HCT116 (cell line): ENCODE measurements at regions of chr17 and their contacts with region 1.

Region 1: GRCh38 chr17:82105882-82106687 is 8.0 kb upstream of the FASN start:
- DNase-seq: peak; percentile 82
- ATAC-seq: peak; percentile 95
- H3K4me3 ChIP-seq: peak overlapping the region; percentile 68 to 70
- H3K27ac ChIP-seq: peak overlapping the region; percentile 94
- H3K4me1 ChIP-seq: peaks cover 37 to 55% of the 10 kb centered on the region in 2 experiments
- H3K27me3 ChIP-seq: no peaks in the 10 kb centered on the region
- CTCF ChIP-seq: peak in 2 of 3 experiments; percentile 71 to 91; a peak in 4 of 6 replicates
- POLR2A ChIP-seq: peak; percentile 95
- RAD21 ChIP-seq: no peak

Region 2: GRCh38 chr17:81911277-81911961 is 194.7 kb before region 1 on chr17 and contains the start of gene PCYT2:
- CTCF ChIA-PET with region 1: no interaction called
- POLR2A ChIA-PET with region 1: no interaction called
- RAD21 ChIA-PET with region 1: no interaction called
- intact Hi-C with region 1: no loop called
- DNase-seq: peak; percentile 90
- ATAC-seq: peak; percentile 88
- H3K4me3 ChIP-seq: peak within 1 kb of the TSS; percentile 85 to 94
- H3K27ac ChIP-seq: peak within 1 kb of the TSS; percentile 72
- H3K4me1 ChIP-seq: peaks cover 34 to 47% of the 10 kb centered on the region in 2 experiments
- H3K27me3 ChIP-seq: no peaks in the 10 kb centered on the region
- CTCF ChIP-seq: peak in 2 of 3 experiments; percentile 39 to 51; a peak in 4 of 6 replicates
- POLR2A ChIP-seq: no peak
- RAD21 ChIP-seq: no peak
- total RNA-seq, gene PCYT2: 51.5 TPM

Region 3: DNA sequence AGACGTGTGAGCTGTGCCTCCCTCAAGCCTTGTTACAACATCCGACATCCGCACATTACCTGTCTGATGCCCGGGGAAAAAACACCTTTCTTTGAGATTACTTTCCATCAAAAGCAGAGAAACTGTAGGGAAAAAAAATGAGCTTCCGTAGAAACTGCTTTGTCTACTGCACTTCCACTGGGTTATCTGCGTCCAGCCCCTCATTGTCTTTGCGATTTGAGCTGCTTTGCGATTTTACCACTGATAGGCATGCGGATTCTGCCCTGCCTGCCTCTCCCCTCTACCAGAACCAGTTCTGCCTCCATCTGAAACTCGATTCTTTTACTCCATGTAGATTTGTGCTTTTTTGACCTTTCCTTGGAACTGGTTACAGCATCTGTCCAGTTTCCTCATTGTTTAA is 35.6 kb after region 1 on chr17:
- CTCF ChIA-PET with region 1: interaction called, 3 read pairs
- POLR2A ChIA-PET with region 1: no interaction called
- RAD21 ChIA-PET with region 1: no interaction called
- intact Hi-C with region 1: loop called (anchors 5 kb)
- DNase-seq: no peak
- ATAC-seq: no peak
- H3K4me3 ChIP-seq: no peak overlapping the region
- H3K27ac ChIP-seq: no peak overlapping the region
- H3K4me1 ChIP-seq: no peaks in the 10 kb centered on the region
- H3K27me3 ChIP-seq: no peaks in the 10 kb centered on the region
- CTCF ChIP-seq: no peak
- POLR2A ChIP-seq: no peak
- RAD21 ChIP-seq: no peak

Region 4: GRCh38 chr17:82153745-82154375 is 47.8 kb after region 1 on chr17:
- CTCF ChIA-PET with region 1: no interaction called
- POLR2A ChIA-PET with region 1: no interaction called
- RAD21 ChIA-PET with region 1: interaction called in 1 of 2 experiments, 4 read pairs
- intact Hi-C with region 1: loop called (anchors 2 kb)
- DNase-seq: peak; percentile 54
- ATAC-seq: peak; percentile 96
- H3K4me3 ChIP-seq: no peak overlapping the region
- H3K27ac ChIP-seq: no peak overlapping the region
- H3K4me1 ChIP-seq: no peaks in the 10 kb centered on the region; a peak in 1 of 4 replicates
- H3K27me3 ChIP-seq: no peaks in the 10 kb centered on the region
- CTCF ChIP-seq: peak; percentile 95 to 99 (median 98)
- POLR2A ChIP-seq: no peak
- RAD21 ChIP-seq: peak; percentile 97